Left ventricle myocardium superior (tissue), 1 donor: ENCODE measurements at regions of chr16 and their contacts with region 1.

Region 1: DNA sequence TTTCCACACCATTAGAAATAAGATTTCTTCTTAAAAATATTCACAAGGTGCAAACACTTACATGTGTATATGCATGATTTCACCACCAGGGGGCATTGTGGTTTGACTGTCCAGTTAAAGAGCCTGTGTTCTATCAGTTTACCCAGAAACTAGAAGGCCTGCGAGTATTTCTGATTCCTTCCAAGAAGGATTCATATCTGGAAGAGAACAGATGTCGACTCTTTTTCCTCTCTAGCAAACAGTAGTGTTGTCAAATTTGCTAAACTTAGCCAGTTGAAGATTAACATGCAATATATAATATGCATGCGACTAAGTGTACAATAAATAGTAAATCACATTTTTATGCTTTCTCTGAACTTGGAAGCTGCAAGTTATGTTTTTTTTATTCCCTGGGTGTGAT is 404.1 kb downstream of the WWOX start:
- DNase-seq: no peak
- ATAC-seq: no peak

Region 2: DNA sequence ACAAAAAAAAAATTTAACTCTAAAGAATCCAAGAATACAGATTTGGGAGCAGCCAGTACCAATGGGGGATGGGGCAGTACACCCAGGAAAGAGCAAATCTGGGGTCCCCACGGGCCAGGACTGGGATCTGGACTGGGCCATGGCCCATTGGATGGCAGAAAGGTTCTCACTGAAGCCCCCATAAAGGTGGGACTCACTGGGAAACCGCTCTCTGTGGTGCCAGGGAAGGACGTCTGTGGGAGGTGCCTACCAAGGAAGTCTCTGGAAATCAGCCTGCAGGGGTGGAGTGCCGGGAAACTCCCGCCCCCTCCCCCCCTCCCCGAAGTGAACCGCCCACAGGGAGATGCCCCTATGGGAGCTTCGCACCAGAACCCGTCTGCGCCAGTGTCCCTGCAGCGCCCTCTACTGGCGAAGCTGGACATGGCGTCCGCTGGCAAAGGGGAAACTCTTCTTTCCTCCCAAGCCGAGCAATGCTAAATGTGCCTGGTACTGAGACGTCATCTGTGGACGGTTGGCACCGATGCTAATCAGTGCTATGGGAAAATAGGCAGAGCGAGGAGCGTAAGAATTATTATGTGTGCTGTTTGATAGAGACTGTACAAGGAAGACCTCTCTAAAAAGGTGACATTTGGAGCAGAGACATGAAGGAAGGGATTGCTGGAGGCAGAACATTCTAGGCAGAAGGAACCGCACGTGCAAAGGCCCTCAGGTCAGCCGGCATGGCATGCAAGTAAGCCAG is 266.9 kb after region 1 on chr16:
- intact Hi-C with region 1: loop called (anchors 5 kb)
- DNase-seq: peak; percentile 86
- ATAC-seq: peak; percentile 83

Region 3: GRCh38 chr16:79601931-79602627 is 1098.5 kb after region 1 on chr16:
- intact Hi-C with region 1: loop called (anchors 5 kb)
- DNase-seq: peak; percentile 74
- ATAC-seq: peak; percentile 43